Heart left ventricle (tissue), 16 donors: ENCODE measurements at regions of chr16 and their contacts with region 1.

Region 1: DNA sequence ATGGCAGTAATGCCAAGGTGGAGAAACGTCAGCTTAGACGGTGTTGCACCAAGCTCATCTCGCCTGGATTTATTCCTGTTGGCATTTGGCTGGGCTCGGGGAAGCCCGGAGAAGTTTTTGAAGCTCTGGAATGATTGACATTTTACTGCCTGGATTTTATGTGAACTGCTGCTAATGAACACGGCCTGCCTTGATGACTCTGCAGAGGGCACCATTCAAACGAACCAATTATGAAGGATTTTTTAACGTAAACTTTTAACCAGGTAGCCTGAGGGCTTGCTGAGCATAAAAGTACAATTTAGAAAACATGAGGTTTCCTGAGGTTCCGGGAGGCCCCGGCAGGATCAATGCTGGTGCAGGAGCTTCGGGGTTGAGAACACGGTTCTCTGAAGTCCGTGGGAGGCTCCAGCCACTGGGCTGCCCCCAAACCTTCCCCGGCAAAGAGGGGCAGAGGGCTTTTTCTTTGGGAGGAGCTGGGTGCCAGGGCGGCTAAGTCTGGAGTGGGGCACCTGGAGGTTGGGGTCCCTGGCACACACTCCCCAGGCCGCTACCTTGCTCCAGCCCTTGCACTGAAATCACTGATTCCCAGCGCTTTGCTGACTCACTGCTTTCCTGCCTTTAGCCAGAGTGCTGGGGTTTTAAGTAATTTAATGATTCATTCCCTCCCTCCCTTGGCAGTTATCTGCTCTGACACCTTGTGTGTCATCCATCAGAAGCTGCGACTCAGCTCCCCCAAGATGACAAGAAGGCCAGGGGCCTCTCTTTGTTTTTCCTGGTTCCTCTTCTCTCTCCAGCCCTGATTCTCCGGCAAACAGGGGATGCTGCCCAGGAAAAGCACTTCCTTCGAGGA is 161.2 kb upstream of the IRX3 start:
- DNase-seq: no peak
- ATAC-seq: peak in 1 of 4 donors; percentile 4
- H3K4me3 ChIP-seq: no peak overlapping the region
- H3K27ac ChIP-seq: no peak overlapping the region
- H3K4me1 ChIP-seq: peaks cover 0 to 17% (median 5%) of the 10 kb centered on the region in 12 donors
- H3K27me3 ChIP-seq: no peaks in the 10 kb centered on the region
- CTCF ChIP-seq: no peak
- POLR2A ChIP-seq: no peak

Region 2: DNA sequence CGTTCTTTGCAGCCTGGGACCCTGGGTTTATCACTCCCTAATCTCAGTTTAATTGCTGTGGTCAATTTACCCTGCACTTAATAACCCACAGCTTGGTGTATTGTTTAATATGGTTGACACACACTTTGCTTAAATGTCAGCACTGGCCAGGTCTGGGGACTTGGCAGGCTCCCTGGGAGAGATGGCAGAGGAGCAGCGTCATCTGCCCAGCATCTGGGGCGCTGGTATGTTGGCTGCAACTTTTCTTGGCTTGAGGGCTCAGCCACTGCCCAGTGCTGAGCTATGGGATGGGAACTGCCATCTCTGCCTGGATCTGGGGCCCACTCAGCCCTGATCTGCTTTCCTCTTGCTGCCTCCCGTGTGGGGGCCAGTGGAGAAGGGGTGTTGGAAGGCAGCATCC is 45.5 kb before region 1 on chr16:
- intact Hi-C with region 1: loop called in 1 of 10 experiments (anchors 5 kb)
- DNase-seq: peak; percentile 59 to 83 (median 77)
- ATAC-seq: peak; percentile 82 to 94 (median 93)
- H3K4me3 ChIP-seq: no peak overlapping the region
- H3K27ac ChIP-seq: peak overlapping the region in 7 of 12 donors; percentile 29 to 53 (median 48)
- H3K4me1 ChIP-seq: peaks cover 0 to 17% (median 2%) of the 10 kb centered on the region in 12 donors
- H3K27me3 ChIP-seq: no peaks in the 10 kb centered on the region
- CTCF ChIP-seq: no peak
- POLR2A ChIP-seq: no peak